Mammary epithelial cell (primary cell): ENCODE measurements at regions of chr20 and their contacts with region 1.

Region 1: GRCh38 chr20:44790638-44791393 is 19.5 kb downstream of the RIMS4 start:
- DNase-seq: no peak
- H3K4me3 ChIP-seq: no peak overlapping the region
- H3K27ac ChIP-seq: no peak overlapping the region
- H3K4me1 ChIP-seq: peaks cover 2% of the 10 kb centered on the region
- H3K27me3 ChIP-seq: peaks cover 5% of the 10 kb centered on the region
- CTCF ChIP-seq: no peak

Region 2: GRCh38 chr20:44651684-44652423 is 139.0 kb before region 1 on chr20 and contains the start of gene ADA:
- CTCF ChIA-PET with region 1: no interaction called
- dilution Hi-C with region 1: no loop called
- in situ Hi-C with region 1: no loop called
- intact Hi-C with region 1: no loop called
- DNase-seq: peak; percentile 63
- H3K4me3 ChIP-seq: peak within 1 kb of the TSS; percentile 60 to 90 (median 76)
- H3K27ac ChIP-seq: peak within 1 kb of the TSS; percentile 56
- H3K4me1 ChIP-seq: peaks cover 9% of the 10 kb centered on the region
- H3K27me3 ChIP-seq: no peaks in the 10 kb centered on the region
- CTCF ChIP-seq: no peak
- total RNA-seq, gene ADA: 4.2 to 10.5 TPM

Region 3: GRCh38 chr20:44738813-44739477 is 51.9 kb before region 1 on chr20:
- CTCF ChIA-PET with region 1: no interaction called
- dilution Hi-C with region 1: loop called (anchors 5 kb)
- in situ Hi-C with region 1: no loop called
- intact Hi-C with region 1: no loop called
- DNase-seq: peak; percentile 73
- H3K4me3 ChIP-seq: no peak overlapping the region
- H3K27ac ChIP-seq: no peak overlapping the region
- H3K4me1 ChIP-seq: peaks cover 4% of the 10 kb centered on the region
- H3K27me3 ChIP-seq: no peaks in the 10 kb centered on the region
- CTCF ChIP-seq: no peak